Motor neuron (in vitro differentiated cells): ENCODE measurements at regions of chr22 and their contacts with region 1.

Region 1: DNA sequence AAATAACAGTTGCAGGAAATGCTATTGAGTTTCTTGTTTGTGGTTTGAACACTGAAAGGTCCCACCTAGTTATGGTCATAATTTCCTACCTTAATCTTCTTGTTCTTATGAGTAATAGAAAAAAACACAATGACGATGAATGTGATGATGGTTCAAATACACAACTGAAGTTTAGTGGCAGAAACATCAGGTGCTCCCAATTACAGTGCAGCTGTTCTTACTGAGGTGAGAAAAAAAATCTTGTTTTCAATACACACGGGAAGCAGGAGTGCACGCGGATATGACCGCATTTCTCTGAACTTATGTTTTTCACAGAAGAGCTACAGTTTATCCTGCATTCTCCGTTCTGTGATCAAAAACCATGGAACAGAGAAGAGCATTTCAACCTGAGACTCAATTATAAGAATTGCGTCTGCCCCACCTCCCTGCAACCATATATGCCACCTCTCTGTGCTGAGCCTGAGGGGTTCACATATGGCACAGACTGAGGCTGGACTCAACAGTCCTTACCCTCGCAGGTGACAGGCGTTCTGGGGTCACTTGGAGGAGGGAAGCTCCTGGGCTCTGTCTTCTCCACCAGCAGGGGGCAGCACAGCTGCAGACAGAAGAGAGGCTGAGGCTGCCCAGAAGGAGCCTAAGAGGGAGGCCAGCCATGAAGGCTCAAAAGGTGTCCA is 99.7 kb upstream of the IGLL5 start:
- ATAC-seq: peak in 3 of 8 experiments; percentile 87 to 96 (median 93)
- H3K4me3 ChIP-seq: no peak overlapping the region
- H3K27ac ChIP-seq: peak overlapping the region; percentile 1 to 62
- H3K4me1 ChIP-seq: no peaks in the 10 kb centered on the region

Region 2: DNA sequence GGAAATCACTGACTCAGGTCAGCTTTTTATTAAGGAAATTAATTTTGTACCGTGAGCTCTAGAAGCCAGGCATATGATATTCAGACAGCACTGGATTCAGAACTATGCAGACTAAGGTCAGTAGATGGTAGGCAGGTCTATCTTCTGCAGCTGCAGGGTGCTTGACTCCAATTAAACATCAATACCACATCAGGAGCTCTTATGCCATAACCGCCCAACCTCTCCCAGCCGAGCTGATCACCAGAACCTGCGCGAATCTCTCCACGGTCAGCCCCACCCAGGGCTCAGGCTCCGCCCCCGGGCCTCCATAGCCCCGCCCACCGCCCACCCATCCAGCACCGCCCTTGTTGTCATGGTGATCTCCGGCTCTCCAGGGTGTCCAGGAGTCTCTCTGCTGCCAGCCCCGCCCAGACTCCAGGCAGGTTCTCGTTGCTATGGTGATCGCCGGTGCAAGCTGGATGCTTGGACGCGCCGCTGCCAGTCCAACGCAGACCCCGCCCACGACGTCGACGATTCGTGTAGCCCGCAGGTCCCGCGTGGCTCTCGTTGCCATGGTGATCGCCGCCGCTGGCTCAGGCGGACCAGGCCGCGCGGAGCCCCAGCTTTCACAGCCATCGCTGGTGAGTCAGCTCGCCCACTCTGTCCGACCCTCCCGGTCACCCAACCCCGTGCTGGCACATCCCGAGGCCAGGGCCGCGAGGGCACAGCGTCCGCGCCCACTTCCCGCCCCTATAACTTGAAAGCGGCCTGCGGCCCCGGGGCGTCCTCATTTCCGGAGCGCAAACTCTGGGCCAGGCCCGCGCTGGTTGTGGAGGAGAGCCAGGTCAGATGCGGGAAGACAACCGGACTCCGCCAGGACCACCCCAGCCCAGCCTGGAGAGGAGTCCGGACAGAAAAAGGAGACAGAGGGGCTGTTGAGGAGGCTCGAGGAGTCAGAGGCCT is 357.3 kb after region 1 on chr22 and contains the start of gene RAB36:
- in situ Hi-C with region 1: loop called in 1 of 9 experiments (anchors 25 kb)
- ATAC-seq: peak; percentile 82 to 90 (median 86)
- H3K4me3 ChIP-seq: peak within 1 kb of the TSS; percentile 37 to 47 (median 44)
- H3K27ac ChIP-seq: peak within 1 kb of the TSS; percentile 66 to 87
- H3K4me1 ChIP-seq: peaks cover 44 to 57% of the 10 kb centered on the region in 2 donors
- total RNA-seq, gene RAB36: 3.1 to 14.4 (median 3.9) TPM